ENCODE measurements at regions of chr1 and their contacts with region 1.

Region 1: GRCh38 chr1:16114527-16115467 is 41.1 kb downstream of the EPHA2 start:
- DNase-seq: no peak
- H3K4me3 ChIP-seq: no peak overlapping the region
- H3K27ac ChIP-seq: no peak overlapping the region
- H3K4me1 ChIP-seq: no peaks in the 10 kb centered on the region
- H3K27me3 ChIP-seq: no peaks in the 10 kb centered on the region
- CTCF ChIP-seq: no peak
- POLR2A ChIP-seq: no peak

Region 2: GRCh38 chr1:16091296-16091695 is 23.5 kb before region 1 on chr1:
- intact Hi-C with region 1: loop called (anchors 2 kb)
- DNase-seq: peak; percentile 83 to 96
- H3K4me3 ChIP-seq: no peak overlapping the region
- H3K27ac ChIP-seq: peak overlapping the region; percentile 60 to 70
- H3K4me1 ChIP-seq: peaks cover 0 to 9% of the 10 kb centered on the region in 2 donors
- H3K27me3 ChIP-seq: no peaks in the 10 kb centered on the region
- CTCF ChIP-seq: no peak
- POLR2A ChIP-seq: no peak